ENCODE measurements at regions of chr10 and their contacts with region 1.

Region 1: DNA sequence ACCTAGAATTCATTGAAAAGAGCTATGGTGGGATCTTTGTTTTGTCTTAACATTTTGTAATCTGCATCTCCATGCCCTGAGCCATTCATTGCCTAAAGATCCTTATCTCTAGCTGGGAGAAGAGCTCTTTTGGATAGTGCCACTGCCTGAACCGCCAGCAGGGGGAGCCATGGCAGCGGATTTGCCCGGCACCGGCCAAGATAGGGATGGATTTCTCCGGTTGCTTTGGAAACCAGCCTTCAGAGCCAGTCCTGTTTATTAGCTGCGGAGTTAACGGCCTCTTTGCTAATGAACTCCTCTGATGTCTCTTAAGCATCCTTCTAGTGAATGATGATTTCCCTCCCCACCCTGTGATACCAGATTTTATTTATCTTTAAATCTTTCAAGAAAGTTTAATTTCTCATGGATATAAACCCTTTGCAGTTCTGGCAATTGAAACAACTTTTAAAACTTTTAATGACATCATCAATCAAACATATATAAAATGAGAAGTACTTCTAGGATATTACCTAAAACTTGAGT is 58.2 kb upstream of the LYZL2 start:
- DNase-seq: peak; percentile 89
- H3K4me3 Mint-ChIP-seq: no peak overlapping the region
- H3K27ac Mint-ChIP-seq: peak overlapping the region; percentile 78
- H3K4me1 Mint-ChIP-seq: peaks cover 71% of the 10 kb centered on the region
- H3K27me3 Mint-ChIP-seq: peaks cover 7% of the 10 kb centered on the region

Region 2: DNA sequence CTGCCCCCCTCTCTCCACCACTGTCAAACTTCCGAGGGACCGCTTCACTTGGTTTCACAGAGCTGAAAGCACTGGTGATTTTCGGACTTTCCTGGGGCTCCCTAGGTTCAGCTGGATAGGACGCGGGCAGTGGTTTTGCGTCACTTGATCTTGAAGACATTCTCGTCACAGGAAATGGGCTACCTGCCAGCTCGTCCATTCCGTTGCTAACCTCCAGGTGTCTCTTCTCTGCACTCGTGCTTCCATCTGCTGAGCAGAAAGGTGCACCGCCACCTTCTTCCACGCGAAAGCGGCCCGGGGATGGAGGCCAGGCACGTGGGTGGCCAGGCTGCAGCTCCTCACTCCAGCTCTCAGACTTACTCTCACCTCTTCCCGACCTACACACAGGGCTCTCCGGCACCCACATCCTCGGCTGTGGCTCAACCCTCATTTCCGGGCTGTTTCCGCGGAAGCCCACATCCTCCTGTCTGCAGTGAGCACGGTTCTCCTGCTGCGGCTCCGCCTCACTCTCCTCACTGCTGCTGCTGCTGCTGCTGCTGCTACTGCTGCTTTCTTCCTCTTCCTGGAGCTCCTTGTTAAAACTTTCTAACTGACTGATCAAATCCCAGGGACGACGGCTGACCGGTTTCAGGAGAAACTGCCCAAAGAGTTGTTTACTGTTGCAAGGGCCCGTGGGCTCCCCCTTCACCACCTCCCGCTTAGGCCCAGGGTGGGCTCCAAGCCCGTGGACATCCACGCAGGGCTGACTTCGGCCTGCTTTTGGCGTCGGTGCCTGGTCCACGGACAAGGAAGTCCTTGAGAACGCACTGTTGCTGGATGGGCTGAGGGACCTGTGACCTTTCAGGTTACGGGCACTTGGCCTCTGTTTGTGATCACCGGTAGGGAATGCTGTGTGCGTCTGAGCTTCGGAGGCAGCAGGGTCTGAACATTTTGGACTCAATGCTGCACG is 660.4 kb before region 1 on chr10:
- CTCF ChIA-PET with region 1: no interaction called
- POLR2A ChIA-PET with region 1: no interaction called
- intact Hi-C with region 1: no loop called
- DNase-seq: peak; percentile 95
- H3K4me3 Mint-ChIP-seq: peak overlapping the region; percentile 67
- H3K27ac Mint-ChIP-seq: peak overlapping the region; percentile 65
- H3K4me1 Mint-ChIP-seq: peaks cover 40% of the 10 kb centered on the region
- H3K27me3 Mint-ChIP-seq: peaks cover 47% of the 10 kb centered on the region

Region 3: GRCh38 chr10:30645340-30645827 is 42.4 kb before region 1 on chr10:
- CTCF ChIA-PET with region 1: interaction called, 9 read pairs
- POLR2A ChIA-PET with region 1: no interaction called
- intact Hi-C with region 1: loop called (anchors 5 kb)
- DNase-seq: peak; percentile 52
- H3K4me3 Mint-ChIP-seq: peak overlapping the region; percentile 24
- H3K27ac Mint-ChIP-seq: no peak overlapping the region
- H3K4me1 Mint-ChIP-seq: peaks cover 23% of the 10 kb centered on the region
- H3K27me3 Mint-ChIP-seq: peaks cover 53% of the 10 kb centered on the region

Region 4: GRCh38 chr10:30671026-30671616 is 16.6 kb before region 1 on chr10:
- CTCF ChIA-PET with region 1: interaction called, 27 read pairs
- POLR2A ChIA-PET with region 1: no interaction called
- intact Hi-C with region 1: no loop called
- DNase-seq: no peak
- H3K4me3 Mint-ChIP-seq: peak overlapping the region; percentile 49
- H3K27ac Mint-ChIP-seq: peak overlapping the region; percentile 52
- H3K4me1 Mint-ChIP-seq: peaks cover 31% of the 10 kb centered on the region
- H3K27me3 Mint-ChIP-seq: peaks cover 17% of the 10 kb centered on the region

Region 5: GRCh38 chr10:30709229-30709628 is 21.5 kb after region 1 on chr10:
- CTCF ChIA-PET with region 1: interaction called, 69 read pairs
- POLR2A ChIA-PET with region 1: interaction called, 49 read pairs
- intact Hi-C with region 1: loop called (anchors 1 kb)
- DNase-seq: peak; percentile 30
- H3K4me3 Mint-ChIP-seq: no peak overlapping the region
- H3K27ac Mint-ChIP-seq: no peak overlapping the region
- H3K4me1 Mint-ChIP-seq: peaks cover 36% of the 10 kb centered on the region
- H3K27me3 Mint-ChIP-seq: no peaks in the 10 kb centered on the region

Region 6: GRCh38 chr10:30818010-30818531 is 130.3 kb after region 1 on chr10:
- CTCF ChIA-PET with region 1: no interaction called
- POLR2A ChIA-PET with region 1: no interaction called
- intact Hi-C with region 1: no loop called
- DNase-seq: no peak
- H3K4me3 Mint-ChIP-seq: no peak overlapping the region
- H3K27ac Mint-ChIP-seq: no peak overlapping the region
- H3K4me1 Mint-ChIP-seq: peaks cover 13% of the 10 kb centered on the region
- H3K27me3 Mint-ChIP-seq: no peaks in the 10 kb centered on the region

Region 7: GRCh38 chr10:30986053-30986555 is 298.3 kb after region 1 on chr10:
- CTCF ChIA-PET with region 1: no interaction called
- POLR2A ChIA-PET with region 1: no interaction called
- intact Hi-C with region 1: loop called (anchors 5 kb)
- DNase-seq: no peak
- H3K4me3 Mint-ChIP-seq: no peak overlapping the region
- H3K27ac Mint-ChIP-seq: peak overlapping the region; percentile 76
- H3K4me1 Mint-ChIP-seq: peaks cover 15% of the 10 kb centered on the region
- H3K27me3 Mint-ChIP-seq: no peaks in the 10 kb centered on the region

Measured in activated CD4-positive, alpha-beta memory T cell treated with anti-CD3 and anti-CD28 coated beads for 36 hours (primary cell).